Right ventricle myocardium inferior (tissue), 1 donor: ENCODE measurements at regions of chr17 and their contacts with region 1.

Region 1: GRCh38 chr17:2847381-2848333 is 51.4 kb downstream of the RAP1GAP2 start:
- DNase-seq: no peak
- ATAC-seq: no peak

Region 2: DNA sequence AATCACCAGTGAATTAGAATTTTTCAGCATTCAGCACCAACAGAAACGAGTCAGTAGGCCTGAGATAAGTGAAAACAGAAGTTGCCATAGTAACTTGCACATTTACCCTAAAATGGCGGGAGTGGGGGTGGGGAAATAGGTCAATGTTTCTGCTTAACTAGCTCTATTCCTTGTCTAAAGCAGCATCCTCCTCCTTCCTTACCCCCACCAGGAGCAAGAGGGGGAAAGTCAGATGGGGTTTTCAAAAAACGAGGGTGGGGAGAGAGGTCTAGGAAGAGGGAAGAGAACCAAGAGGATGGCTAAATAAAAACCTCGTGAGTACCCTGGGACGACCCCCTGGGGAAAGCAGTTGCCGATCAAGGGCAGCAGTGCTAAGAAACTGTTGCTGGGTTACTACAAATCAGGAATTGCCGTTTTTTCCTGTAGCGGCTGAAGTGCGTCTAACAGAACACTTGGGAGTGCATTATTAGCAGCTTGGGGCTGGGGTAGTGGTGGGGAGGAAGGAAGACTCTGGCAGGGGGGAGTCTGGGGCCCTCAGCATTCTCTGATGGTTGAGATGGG is 412.4 kb before region 1 on chr17:
- intact Hi-C with region 1: no loop called
- DNase-seq: no peak
- ATAC-seq: no peak

Region 3: DNA sequence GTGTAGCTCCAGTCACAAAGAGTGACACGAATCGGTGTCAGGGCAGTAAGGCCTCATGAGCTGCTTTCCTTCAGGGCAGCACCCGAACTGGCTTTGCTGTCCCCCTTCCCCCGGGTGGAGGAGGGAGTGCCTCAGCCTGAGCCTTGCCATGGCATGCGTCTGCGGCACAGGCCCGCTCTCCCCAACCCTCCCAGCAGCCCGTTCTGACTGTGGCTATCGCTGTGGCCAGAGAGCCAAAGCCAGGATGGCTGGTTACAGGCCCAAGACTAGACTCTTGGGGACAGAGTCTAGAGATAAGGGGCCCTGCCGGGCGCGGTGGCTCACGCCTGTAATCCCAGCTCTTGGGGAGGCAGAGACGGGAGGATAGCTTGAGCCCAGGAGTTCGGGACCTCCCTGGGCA is 162.0 kb before region 1 on chr17:
- intact Hi-C with region 1: no loop called
- DNase-seq: no peak
- ATAC-seq: no peak

Region 4: GRCh38 chr17:2825253-2825970 is 22.2 kb before region 1 on chr17:
- intact Hi-C with region 1: no loop called
- DNase-seq: no peak
- ATAC-seq: no peak

Region 5: DNA sequence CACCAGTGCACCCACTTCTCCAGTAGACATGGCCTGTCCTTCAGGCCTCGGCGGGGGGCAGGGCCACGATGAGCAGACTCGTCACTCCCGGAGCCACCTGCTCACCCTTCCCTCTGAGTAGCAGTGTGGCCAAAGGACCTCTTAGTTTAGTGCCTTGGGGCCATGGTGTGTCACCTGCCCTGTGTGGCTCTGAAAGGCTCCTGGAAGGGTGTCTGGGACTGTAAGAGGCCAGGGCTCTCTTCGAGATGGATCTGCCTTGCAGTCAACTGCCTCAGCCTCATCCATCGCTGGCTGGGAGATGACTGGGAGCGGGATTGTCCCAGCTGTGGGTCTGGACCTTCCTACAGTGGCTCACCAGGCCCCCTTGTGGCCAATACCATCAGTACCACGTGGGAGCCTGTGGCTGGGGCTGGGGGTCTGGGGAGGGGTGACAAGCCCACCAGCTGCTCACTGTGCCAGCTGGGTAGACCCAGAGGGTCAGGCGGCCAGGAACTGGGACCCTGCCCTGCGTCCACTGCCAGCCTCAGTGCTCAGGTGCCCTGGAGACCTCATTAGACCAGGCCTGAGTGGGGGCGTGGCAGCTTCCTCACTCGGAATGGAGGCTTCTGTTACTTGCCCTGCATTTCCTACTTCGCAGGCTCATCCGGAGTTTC is 82.3 kb after region 1 on chr17:
- intact Hi-C with region 1: loop called (anchors 2 kb)
- DNase-seq: no peak
- ATAC-seq: peak; percentile 55